HEK293T (cell line): ENCODE measurements at regions of chr16 and their contacts with region 1.

Region 1: DNA sequence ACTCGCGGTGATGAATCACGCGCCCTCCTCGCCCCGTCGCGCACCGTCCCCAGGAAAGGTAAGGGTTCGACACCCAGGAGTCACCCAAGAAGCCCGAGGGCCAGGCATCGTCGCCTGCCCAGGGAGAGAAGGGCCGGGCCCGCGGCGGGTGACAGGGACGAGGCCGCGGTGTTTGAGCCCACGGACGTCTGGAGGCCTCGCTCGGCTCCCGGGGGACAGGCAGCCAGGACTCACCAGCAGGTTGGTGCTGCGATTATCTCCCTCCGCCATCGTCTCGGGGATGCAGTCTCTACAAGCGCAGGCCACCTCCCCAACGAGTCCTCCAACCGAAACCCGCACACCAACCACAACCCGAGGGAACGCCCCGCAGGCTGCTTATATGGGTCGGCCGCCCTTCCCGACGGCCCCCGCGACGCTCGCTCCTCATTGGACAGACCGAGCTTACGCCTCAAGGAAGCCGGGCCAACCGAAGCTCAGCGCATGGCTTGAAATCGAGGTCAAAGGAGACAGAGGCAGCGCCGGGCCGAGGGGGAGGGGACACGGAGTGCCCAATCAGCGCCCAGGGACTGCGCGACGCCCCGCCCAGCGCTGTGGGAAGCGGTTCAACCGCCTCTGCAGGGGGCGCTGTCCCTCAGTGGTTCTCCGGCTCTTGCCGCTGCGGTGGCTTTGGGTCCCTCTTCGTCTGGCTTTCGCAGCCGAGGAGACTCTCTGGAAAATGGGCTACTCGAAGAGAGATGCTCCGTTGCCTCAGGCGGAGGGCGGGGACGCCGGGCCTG is at the start of gene ARL6IP1:
- DNase-seq: peak; percentile 96

Region 2: GRCh38 chr16:18789850-18790724 is 11.3 kb before region 1 on chr16 and contains the start of gene RPS15A:
- CTCF ChIA-PET with region 1: interaction called, 7 read pairs
- POLR2A ChIA-PET with region 1: interaction called, 172 read pairs
- DNase-seq: peak; percentile 97

Region 3: GRCh38 chr16:18855196-18855595 is 53.8 kb after region 1 on chr16:
- CTCF ChIA-PET with region 1: no interaction called
- POLR2A ChIA-PET with region 1: no interaction called
- DNase-seq: no peak

Region 4: GRCh38 chr16:18932243-18932981 is 131.0 kb after region 1 on chr16:
- CTCF ChIA-PET with region 1: no interaction called
- POLR2A ChIA-PET with region 1: interaction called, 10 read pairs
- DNase-seq: no peak

Region 5: GRCh38 chr16:18959031-18959505 is 157.7 kb after region 1 on chr16:
- CTCF ChIA-PET with region 1: interaction called, 5 read pairs
- POLR2A ChIA-PET with region 1: interaction called, 10 read pairs
- DNase-seq: no peak

Region 6: GRCh38 chr16:19029980-19030379 is 228.6 kb after region 1 on chr16:
- CTCF ChIA-PET with region 1: no interaction called
- POLR2A ChIA-PET with region 1: no interaction called
- DNase-seq: no peak

Region 7: DNA sequence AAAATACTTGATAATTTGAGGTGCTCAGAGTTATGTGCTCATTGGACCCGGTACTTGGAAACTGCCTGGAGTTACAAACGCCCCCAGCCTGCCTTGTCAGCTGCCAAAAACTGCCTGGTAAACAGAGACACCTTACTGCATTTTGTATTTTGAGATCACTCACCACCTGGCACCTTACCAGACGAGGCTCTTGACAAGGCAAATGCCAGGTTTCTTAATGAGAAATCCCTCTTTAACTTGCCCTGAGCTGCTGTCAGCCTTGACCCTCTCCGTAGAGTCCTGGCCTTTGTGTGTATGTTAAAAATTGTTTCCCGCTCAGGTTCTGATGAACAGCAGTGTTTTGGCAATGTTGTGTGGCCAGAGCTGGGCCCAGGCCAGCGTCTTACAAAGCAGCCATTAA is 395.5 kb after region 1 on chr16:
- CTCF ChIA-PET with region 1: no interaction called
- POLR2A ChIA-PET with region 1: no interaction called
- DNase-seq: no peak